Cardiac septum (tissue), 1 donor: ENCODE measurements at regions of chr22 and their contacts with region 1.

Region 1: GRCh38 chr22:38214256-38215056 is 12.7 kb downstream of the MAFF start:
- DNase-seq: no peak

Region 2: DNA sequence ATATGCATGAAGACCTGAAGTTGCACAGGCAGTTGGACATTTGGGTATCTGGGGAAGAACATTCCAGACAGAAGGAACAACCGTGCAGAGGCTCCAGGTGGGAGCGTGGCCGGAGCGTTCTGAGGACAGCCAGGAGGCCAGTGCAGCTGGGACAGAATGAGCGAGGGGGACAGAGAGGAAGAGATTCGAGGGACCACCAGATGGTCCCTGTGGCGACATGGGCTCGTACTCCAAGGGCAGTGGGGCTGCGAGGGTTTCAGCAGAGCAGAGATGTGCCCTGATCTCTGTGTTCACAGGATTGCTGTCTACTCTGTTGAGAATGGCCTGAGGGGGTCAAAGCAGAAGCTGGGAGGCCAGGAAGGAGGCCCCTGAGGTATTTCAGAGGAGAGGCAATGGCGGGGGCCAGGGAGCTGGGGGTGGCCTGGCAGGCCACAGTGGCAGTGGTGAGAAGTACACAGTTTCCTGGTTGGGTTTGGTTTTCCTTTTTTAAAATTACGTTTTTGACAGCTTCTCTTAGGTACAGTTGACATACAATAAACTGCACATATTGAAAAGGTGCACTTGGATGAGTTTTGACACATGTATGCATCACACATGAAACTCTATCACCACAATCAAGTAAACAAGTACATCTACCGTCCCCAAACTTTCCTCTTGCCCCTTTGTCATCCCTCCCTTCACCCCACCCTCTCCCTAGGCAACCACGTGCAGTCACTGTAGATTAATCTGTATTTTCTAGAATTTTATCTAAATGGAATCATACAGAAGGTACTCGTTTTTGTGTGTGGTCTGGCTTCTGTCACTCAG is 205.3 kb before region 1 on chr22:
- intact Hi-C with region 1: no loop called
- DNase-seq: no peak

Region 3: GRCh38 chr22:38176170-38176741 is 38.2 kb before region 1 on chr22:
- intact Hi-C with region 1: loop called (anchors 5 kb)
- DNase-seq: peak; percentile 83